ENCODE measurements at regions of chr2 and their contacts with region 1.

Region 1: DNA sequence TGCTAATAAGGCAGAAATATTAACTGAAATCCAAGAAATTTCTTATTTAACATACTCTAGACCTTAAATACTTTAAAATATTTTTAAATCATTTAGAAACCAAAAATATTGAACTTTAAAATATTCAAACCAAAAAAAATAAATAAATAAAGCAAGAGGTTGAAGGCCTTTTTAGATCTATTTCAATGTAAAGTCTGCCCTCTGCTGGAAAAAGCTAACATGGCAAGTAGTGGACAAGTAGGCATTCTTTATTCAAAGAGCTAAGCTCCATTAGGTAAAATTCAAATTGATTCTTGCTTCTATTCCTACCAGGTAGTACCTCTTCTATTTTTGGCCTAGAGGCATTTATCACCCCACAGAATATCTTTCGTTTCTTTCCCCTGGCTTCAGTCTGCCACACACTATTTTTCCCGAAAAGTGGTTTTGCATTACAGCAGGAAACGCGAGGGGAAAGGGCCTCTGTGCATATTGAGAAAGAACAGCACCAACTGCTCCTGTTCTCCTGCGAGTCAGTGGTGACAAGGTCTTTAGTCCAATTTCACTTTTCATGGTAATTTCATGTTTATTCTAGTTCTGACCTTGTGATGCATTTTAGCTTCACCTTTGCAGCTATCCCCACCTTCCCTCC is 20.4 kb downstream of the IFIH1 start:
- DNase-seq: peak in 30 of 42 donors; percentile 14 to 92 (median 74)

Region 2: DNA sequence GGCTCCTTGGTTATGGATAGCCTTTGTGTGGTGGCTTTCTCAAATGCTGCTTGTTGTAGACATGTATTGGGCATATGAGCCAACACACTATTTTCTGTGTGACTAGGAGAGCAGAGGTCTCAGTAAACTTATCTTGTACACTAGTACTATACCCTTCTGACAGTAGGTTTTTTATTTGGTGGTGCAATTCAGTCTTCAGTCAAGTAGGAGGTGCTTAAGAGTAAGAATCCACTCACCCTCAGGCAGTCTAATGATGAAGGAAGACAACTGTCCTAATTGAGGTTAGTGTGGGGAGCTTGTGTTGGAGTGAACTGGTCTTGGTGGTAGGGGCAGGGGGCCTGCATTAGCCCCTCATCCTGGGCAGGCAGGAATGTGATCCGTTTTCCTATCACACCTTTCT is 509.9 kb before region 1 on chr2:
- intact Hi-C with region 1: no loop called
- DNase-seq: no peak

Region 3: GRCh38 chr2:162221064-162221463 is 77.0 kb before region 1 on chr2:
- intact Hi-C with region 1: loop called (anchors 5 kb)
- DNase-seq: peak in 41 of 42 donors; percentile 24 to 88 (median 69)